Heart right ventricle (tissue), 16 donors: ENCODE measurements at regions of chr5 and their contacts with region 1.

Region 1: DNA sequence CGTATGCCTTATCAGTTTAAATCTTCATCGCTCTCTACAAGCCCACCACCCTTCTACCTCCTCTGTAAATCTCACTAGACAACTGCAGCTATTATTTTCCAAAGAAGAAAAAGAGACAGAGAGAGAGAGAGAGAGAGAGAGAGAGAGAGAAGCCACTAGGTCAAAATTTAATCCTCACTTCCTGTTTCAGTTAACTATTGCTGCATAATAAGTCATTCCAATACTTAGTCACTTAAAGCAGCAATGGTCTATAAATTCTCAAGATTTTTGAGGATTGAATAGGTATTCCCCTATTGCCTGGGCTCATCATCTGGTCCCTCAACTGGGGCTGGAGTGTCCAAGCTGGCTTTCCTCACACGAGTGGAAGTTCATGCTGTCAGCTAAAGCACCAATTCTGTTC is 68.8 kb downstream of the ITGA1 start:
- DNase-seq: no peak
- ATAC-seq: no peak
- H3K4me3 ChIP-seq: no peak overlapping the region
- H3K27ac ChIP-seq: no peak overlapping the region
- H3K4me1 ChIP-seq: peaks cover 0 to 39% (median 7%) of the 10 kb centered on the region in 9 donors
- H3K27me3 ChIP-seq: no peaks in the 10 kb centered on the region
- CTCF ChIP-seq: no peak

Region 2: GRCh38 chr5:52693280-52693679 is 163.3 kb before region 1 on chr5:
- intact Hi-C with region 1: loop called in 1 of 10 experiments (anchors 5 kb)
- DNase-seq: peak; percentile 31 to 58
- ATAC-seq: peak; percentile 57 to 88 (median 80)
- H3K4me3 ChIP-seq: no peak overlapping the region
- H3K27ac ChIP-seq: peak overlapping the region in 4 of 10 donors; percentile 5 to 73 (median 41)
- H3K4me1 ChIP-seq: peaks cover 0 to 64% (median 26%) of the 10 kb centered on the region in 9 donors
- H3K27me3 ChIP-seq: no peaks in the 10 kb centered on the region
- CTCF ChIP-seq: peak; percentile 51 to 88 (median 69)

Region 3: DNA sequence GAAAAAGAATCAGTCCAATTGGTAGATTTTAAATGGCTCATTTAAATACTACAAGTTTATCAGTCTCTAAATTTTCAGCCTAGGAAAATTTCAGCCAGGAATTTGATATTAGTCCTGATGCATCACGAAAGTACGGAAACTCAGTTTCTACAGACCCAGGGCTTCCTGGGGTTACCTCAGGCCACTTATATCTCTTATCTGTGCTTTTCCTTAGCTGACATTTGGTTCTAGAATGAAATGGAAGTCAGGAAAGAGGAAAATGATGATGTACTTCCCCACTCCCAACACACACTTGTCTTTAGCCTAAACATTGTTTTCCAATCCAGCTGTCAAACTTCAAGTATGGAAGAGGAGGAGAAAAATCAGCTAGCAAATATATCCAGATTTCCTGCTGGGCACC is 41.8 kb before region 1 on chr5:
- intact Hi-C with region 1: loop called in 1 of 10 experiments (anchors 5 kb)
- DNase-seq: no peak
- ATAC-seq: peak in 6 of 8 donors; percentile 41 to 74 (median 59)
- H3K4me3 ChIP-seq: no peak overlapping the region
- H3K27ac ChIP-seq: peak overlapping the region in 7 of 10 donors; percentile 25 to 52 (median 42)
- H3K4me1 ChIP-seq: peaks cover 0 to 88% (median 47%) of the 10 kb centered on the region in 9 donors
- H3K27me3 ChIP-seq: no peaks in the 10 kb centered on the region
- CTCF ChIP-seq: no peak

Region 4: GRCh38 chr5:52893105-52893504 is 36.5 kb after region 1 on chr5:
- intact Hi-C with region 1: loop called in 1 of 10 experiments (anchors 5 kb)
- DNase-seq: no peak
- ATAC-seq: peak in 6 of 8 donors; percentile 22 to 70 (median 49)
- H3K4me3 ChIP-seq: no peak overlapping the region
- H3K27ac ChIP-seq: peak overlapping the region in 2 of 10 donors; percentile 8 to 65
- H3K4me1 ChIP-seq: peaks cover 10 to 54% (median 34%) of the 10 kb centered on the region in 9 donors
- H3K27me3 ChIP-seq: no peaks in the 10 kb centered on the region
- CTCF ChIP-seq: no peak

Region 5: GRCh38 chr5:52909192-52909591 is 52.6 kb after region 1 on chr5:
- intact Hi-C with region 1: loop called in 1 of 10 experiments (anchors 10 kb)
- DNase-seq: peak in 1 of 2 donors; percentile 12
- ATAC-seq: peak in 5 of 8 donors; percentile 61 to 90 (median 72)
- H3K4me3 ChIP-seq: no peak overlapping the region
- H3K27ac ChIP-seq: peak overlapping the region in 6 of 10 donors; percentile 2 to 66 (median 44)
- H3K4me1 ChIP-seq: peaks cover 0 to 32% (median 17%) of the 10 kb centered on the region in 9 donors
- H3K27me3 ChIP-seq: no peaks in the 10 kb centered on the region
- CTCF ChIP-seq: no peak

Region 6: DNA sequence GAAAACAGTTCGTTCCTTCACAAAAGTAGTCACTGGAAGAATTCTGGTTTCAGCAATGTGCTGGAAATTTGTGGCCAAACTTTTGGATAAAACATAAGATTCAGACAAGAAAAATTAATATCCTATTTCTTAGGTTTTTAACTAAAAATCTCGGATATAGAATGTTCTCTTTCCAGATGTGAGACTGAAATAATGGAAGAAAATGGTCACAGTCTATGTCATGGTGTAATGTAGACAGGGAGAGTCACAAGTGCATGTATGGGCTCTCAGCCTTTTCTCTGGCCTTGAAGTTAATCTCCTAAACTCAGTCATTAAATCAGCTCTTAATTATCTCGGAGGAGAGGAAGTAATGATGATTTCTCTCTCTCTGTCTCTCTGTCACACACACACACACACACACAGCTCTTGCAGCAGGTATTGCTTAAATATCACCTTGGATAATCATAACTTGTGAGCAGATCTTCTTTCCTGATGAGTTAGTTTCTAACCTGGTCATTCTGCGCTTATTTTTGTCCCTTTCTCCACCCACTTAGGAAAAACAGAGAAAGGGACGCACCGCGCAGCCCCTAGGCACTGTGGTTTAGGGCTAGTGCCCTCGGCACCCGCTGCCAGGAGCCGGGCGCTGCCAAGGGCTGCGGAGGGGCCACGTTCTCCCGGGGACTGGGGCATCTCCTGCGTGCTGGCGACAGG is 131.9 kb after region 1 on chr5:
- intact Hi-C with region 1: no loop called
- DNase-seq: no peak
- ATAC-seq: peak in 4 of 8 donors; percentile 3 to 27 (median 14)
- H3K4me3 ChIP-seq: peak overlapping the region; percentile 41 to 75 (median 63)
- H3K27ac ChIP-seq: peak overlapping the region in 5 of 10 donors; percentile 43 to 76 (median 46)
- H3K4me1 ChIP-seq: peaks cover 0 to 33% (median 15%) of the 10 kb centered on the region in 9 donors
- H3K27me3 ChIP-seq: peaks cover 0 to 14% (median 0%) of the 10 kb centered on the region in 7 donors
- CTCF ChIP-seq: no peak